GM13976 (cell line): ENCODE measurements at regions of chr22 and their contacts with region 1.

Region 1: GRCh38 chr22:44735540-44736488 is 16.6 kb upstream of the ARHGAP8 start:
- DNase-seq: peak; percentile 92
- CTCF ChIP-seq: peak; percentile 99

Region 2: GRCh38 chr22:44697423-44698141 is 38.2 kb before region 1 on chr22:
- in situ Hi-C with region 1: loop called (anchors 5 kb)
- DNase-seq: peak; percentile 90
- CTCF ChIP-seq: peak; percentile 94

Region 3: GRCh38 chr22:44782363-44782963 is 46.6 kb after region 1 on chr22:
- in situ Hi-C with region 1: no loop called
- DNase-seq: no peak
- CTCF ChIP-seq: no peak